ENCODE measurements at regions of chr18 and their contacts with region 1.

Region 1: DNA sequence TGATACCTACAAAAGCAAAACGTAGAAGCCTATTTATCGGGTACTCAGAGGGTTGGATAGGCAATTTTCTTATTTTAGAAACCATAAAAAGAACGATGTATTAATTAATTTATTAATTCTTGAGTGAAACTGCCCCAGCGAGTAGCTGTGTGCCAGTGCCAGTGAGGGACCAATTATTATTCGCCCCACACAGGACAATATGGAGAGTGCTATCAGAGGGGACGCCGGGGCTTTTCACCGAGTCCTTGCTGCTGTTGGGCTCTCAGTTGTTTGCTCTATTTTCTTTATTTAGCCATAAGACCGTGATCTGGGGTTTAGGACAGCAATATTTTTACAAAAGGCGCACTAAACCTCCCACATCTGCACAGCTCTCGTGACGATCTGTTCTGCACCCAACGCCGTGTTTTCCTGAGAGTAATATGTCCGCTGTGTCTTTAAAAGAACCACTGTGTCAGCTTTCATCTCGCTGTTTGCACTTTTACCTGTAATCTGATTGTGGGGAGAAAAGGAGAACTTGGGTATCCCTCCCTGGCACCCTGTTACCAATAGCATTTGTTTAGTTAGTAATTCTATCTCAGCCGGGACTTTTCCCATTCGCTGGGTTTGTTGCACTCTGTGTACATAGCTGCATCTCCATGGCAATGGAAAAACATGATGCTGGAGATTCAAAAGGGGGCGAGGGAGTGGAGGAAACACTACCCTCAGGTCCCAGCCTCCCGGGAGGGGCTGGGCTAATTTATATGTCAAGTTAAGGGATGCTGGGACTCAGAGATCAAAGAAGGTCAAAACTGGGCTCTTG is 30.1 kb upstream of the ZNF516 start:
- DNase-seq: no peak
- H3K4me3 ChIP-seq: peak overlapping the region in 5 of 8 donors; percentile 3 to 56 (median 23)
- H3K27ac ChIP-seq: peak overlapping the region in 6 of 8 donors; percentile 38 to 69 (median 60)
- H3K4me1 ChIP-seq: peaks cover 0 to 24% (median 10%) of the 10 kb centered on the region in 6 donors
- H3K27me3 ChIP-seq: peaks cover 0 to 38% (median 7%) of the 10 kb centered on the region in 7 donors
- CTCF ChIP-seq: no peak
- POLR2A ChIP-seq: no peak

Region 2: DNA sequence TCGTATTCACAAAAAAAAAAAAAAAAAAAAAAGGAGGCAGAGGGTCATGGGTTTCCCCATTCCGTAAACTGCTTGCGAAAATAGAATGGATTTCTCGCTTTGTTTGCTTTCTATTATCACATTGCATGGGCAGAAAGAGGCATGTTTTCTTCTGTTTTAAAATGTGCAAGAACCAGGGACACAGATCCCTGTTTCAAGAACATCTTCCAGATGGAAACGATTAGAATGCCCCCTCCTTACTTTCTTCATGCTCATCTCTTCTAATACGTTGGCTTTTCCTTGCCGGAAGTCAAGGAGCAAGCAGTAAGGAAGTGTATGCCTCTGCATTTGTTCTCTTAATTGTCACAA is 21.0 kb after region 1 on chr18:
- intact Hi-C with region 1: loop called (anchors 2 kb)
- DNase-seq: no peak
- H3K4me3 ChIP-seq: peak overlapping the region in 1 of 8 donors; percentile 37
- H3K27ac ChIP-seq: peak overlapping the region in 7 of 8 donors; percentile 53 to 87 (median 83)
- H3K4me1 ChIP-seq: peaks cover 0 to 17% (median 0%) of the 10 kb centered on the region in 6 donors
- H3K27me3 ChIP-seq: no peaks in the 10 kb centered on the region
- CTCF ChIP-seq: no peak
- POLR2A ChIP-seq: no peak